ENCODE measurements at regions of chr5 and their contacts with region 1.

Region 1: GRCh38 chr5:150497274-150497988 is 10.5 kb upstream of the NDST1 start:
- H3K4me3 ChIP-seq: no peak overlapping the region
- H3K27ac ChIP-seq: no peak overlapping the region
- H3K4me1 ChIP-seq: peaks cover 27% of the 10 kb centered on the region
- CTCF ChIP-seq: no peak

Region 2: GRCh38 chr5:150263801-150264621 is 233.4 kb before region 1 on chr5:
- CTCF ChIA-PET with region 1: no interaction called
- POLR2A ChIA-PET with region 1: no interaction called
- H3K4me3 ChIP-seq: no peak overlapping the region
- H3K27ac ChIP-seq: no peak overlapping the region
- H3K4me1 ChIP-seq: no peaks in the 10 kb centered on the region
- CTCF ChIP-seq: no peak

Region 3: GRCh38 chr5:150486402-150487198 is 10.8 kb before region 1 on chr5:
- CTCF ChIA-PET with region 1: interaction called, 6 read pairs
- POLR2A ChIA-PET with region 1: interaction called, 11 read pairs
- H3K4me3 ChIP-seq: peak overlapping the region; percentile 87
- H3K27ac ChIP-seq: peak overlapping the region; percentile 92
- H3K4me1 ChIP-seq: peaks cover 24% of the 10 kb centered on the region
- CTCF ChIP-seq: no peak

Measured in HEK293 (cell line).